ENCODE measurements at regions of chr5 and their contacts with region 1.

Region 1: GRCh38 chr5:81165493-81166119 is 67.5 kb upstream of the CKMT2 start:
- DNase-seq: peak in 8 of 9 donors; percentile 18 to 55 (median 43)
- ATAC-seq: peak; percentile 73
- H3K4me3 ChIP-seq: no peak overlapping the region
- H3K4me3 Mint-ChIP-seq: no peak overlapping the region
- H3K27ac ChIP-seq: no peak overlapping the region
- H3K27ac Mint-ChIP-seq: peak overlapping the region in 3 of 9 donors; percentile 7 to 20 (median 14)
- H3K4me1 ChIP-seq: no peaks in the 10 kb centered on the region
- H3K4me1 Mint-ChIP-seq: peaks cover 0 to 13% (median 3%) of the 10 kb centered on the region in 7 donors
- H3K27me3 ChIP-seq: no peaks in the 10 kb centered on the region
- H3K27me3 Mint-ChIP-seq: no peaks in the 10 kb centered on the region

Region 2: GRCh38 chr5:80487829-80488721 is 677.5 kb before region 1 on chr5 and contains the start of gene FAM151B:
- CTCF ChIA-PET with region 1: no interaction called
- POLR2A ChIA-PET with region 1: no interaction called
- intact Hi-C with region 1: loop called in 1 of 2 experiments (anchors 10 kb)
- DNase-seq: peak; percentile 58 to 86 (median 79)
- ATAC-seq: peak; percentile 90
- H3K4me3 ChIP-seq: peak within 1 kb of the TSS; percentile 71
- H3K4me3 Mint-ChIP-seq: peak within 1 kb of the TSS; percentile 83 to 92 (median 88)
- H3K27ac ChIP-seq: peak within 1 kb of the TSS; percentile 52
- H3K27ac Mint-ChIP-seq: peak within 1 kb of the TSS; percentile 47 to 88 (median 72)
- H3K4me1 ChIP-seq: peaks cover 0 to 7% of the 10 kb centered on the region in 2 donors
- H3K4me1 Mint-ChIP-seq: peaks cover 9 to 27% (median 14%) of the 10 kb centered on the region in 7 donors
- H3K27me3 ChIP-seq: no peaks in the 10 kb centered on the region
- H3K27me3 Mint-ChIP-seq: peaks cover 0 to 36% (median 7%) of the 10 kb centered on the region in 5 donors
- total RNA-seq, gene FAM151B: 0.36 to 3.4 (median 1.1) TPM in 4 of 5 experiments, not detected in the other

Region 3: DNA sequence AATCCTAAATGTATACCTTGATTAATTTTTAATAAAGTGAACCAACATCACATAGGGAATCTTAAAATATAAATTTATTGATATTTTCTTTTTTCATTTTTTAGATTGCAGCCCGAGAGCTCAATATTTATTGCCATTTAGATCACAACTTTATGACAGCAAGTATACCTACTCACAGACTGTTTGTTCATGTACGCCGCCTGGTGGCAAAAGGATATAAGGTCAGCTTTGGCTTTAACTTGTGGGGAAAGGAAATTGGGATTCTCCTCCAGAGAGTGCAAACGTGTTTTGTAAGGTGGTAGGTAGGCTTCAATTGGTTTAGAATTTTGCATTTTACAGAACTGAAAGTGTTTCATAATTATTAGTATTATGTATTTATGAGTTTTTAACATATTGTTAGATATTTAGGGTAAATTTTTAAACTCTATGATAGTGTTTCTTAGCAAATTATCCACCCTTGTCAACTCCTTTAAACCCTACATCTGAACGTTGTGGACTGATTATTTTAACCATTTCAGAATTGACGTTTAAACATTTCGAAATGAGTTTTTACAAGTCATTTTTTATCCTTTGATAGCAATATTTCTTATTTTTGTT is 493.4 kb before region 1 on chr5:
- CTCF ChIA-PET with region 1: no interaction called
- POLR2A ChIA-PET with region 1: no interaction called
- intact Hi-C with region 1: loop called in 1 of 2 experiments (anchors 1 kb)
- DNase-seq: peak; percentile 26 to 62 (median 48)
- ATAC-seq: peak; percentile 85
- H3K4me3 ChIP-seq: no peak overlapping the region
- H3K4me3 Mint-ChIP-seq: no peak overlapping the region
- H3K27ac ChIP-seq: no peak overlapping the region
- H3K27ac Mint-ChIP-seq: no peak overlapping the region
- H3K4me1 ChIP-seq: no peaks in the 10 kb centered on the region
- H3K4me1 Mint-ChIP-seq: peaks cover 0 to 19% (median 4%) of the 10 kb centered on the region in 7 donors
- H3K27me3 ChIP-seq: no peaks in the 10 kb centered on the region
- H3K27me3 Mint-ChIP-seq: no peaks in the 10 kb centered on the region

Region 4: DNA sequence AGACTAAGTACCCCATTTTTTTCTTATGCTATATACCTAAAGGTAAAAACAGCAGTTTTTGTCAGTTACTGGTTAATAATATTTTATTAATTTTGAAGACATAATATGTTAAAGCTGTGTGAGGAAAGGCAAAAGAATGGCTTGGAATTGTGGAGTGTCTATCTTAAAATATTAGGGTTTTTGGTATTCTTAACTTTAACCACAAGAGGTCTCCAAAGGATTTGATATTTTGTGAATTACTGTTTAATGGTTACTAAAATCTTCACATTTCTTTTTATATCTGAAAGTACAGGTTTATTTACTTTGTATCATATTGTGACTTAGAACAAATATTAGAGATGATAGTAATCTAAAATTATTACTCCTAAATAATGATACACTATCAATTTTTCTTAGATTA is 478.8 kb before region 1 on chr5:
- CTCF ChIA-PET with region 1: interaction called, 5 read pairs
- POLR2A ChIA-PET with region 1: no interaction called
- intact Hi-C with region 1: loop called (anchors 1 kb)
- DNase-seq: peak in 5 of 9 donors; percentile 11 to 42 (median 19)
- ATAC-seq: no peak
- H3K4me3 ChIP-seq: no peak overlapping the region
- H3K4me3 Mint-ChIP-seq: no peak overlapping the region
- H3K27ac ChIP-seq: no peak overlapping the region
- H3K27ac Mint-ChIP-seq: no peak overlapping the region
- H3K4me1 ChIP-seq: no peaks in the 10 kb centered on the region
- H3K4me1 Mint-ChIP-seq: peaks cover 7 to 35% (median 14%) of the 10 kb centered on the region in 7 donors
- H3K27me3 ChIP-seq: no peaks in the 10 kb centered on the region
- H3K27me3 Mint-ChIP-seq: no peaks in the 10 kb centered on the region

Region 5: GRCh38 chr5:80711938-80712337 is 453.7 kb before region 1 on chr5:
- CTCF ChIA-PET with region 1: interaction called, 5 read pairs
- POLR2A ChIA-PET with region 1: no interaction called
- intact Hi-C with region 1: loop called in 1 of 2 experiments (anchors 1 kb)
- DNase-seq: no peak
- ATAC-seq: no peak
- H3K4me3 ChIP-seq: no peak overlapping the region
- H3K4me3 Mint-ChIP-seq: no peak overlapping the region
- H3K27ac ChIP-seq: no peak overlapping the region
- H3K27ac Mint-ChIP-seq: peak overlapping the region in 1 of 9 donors; percentile 72
- H3K4me1 ChIP-seq: no peaks in the 10 kb centered on the region
- H3K4me1 Mint-ChIP-seq: peaks cover 0 to 42% (median 4%) of the 10 kb centered on the region in 7 donors
- H3K27me3 ChIP-seq: no peaks in the 10 kb centered on the region
- H3K27me3 Mint-ChIP-seq: no peaks in the 10 kb centered on the region

Region 6: GRCh38 chr5:80935811-80936385 is 229.7 kb before region 1 on chr5:
- CTCF ChIA-PET with region 1: interaction called, 3 read pairs
- POLR2A ChIA-PET with region 1: no interaction called
- intact Hi-C with region 1: loop called in 1 of 2 experiments (anchors 1 kb)
- DNase-seq: peak in 1 of 9 donors; percentile 15
- ATAC-seq: no peak
- H3K4me3 ChIP-seq: no peak overlapping the region
- H3K4me3 Mint-ChIP-seq: no peak overlapping the region
- H3K27ac ChIP-seq: no peak overlapping the region
- H3K27ac Mint-ChIP-seq: peak overlapping the region in 2 of 9 donors; percentile 16 to 69
- H3K4me1 ChIP-seq: no peaks in the 10 kb centered on the region
- H3K4me1 Mint-ChIP-seq: peaks cover 0 to 13% (median 7%) of the 10 kb centered on the region in 7 donors
- H3K27me3 ChIP-seq: no peaks in the 10 kb centered on the region
- H3K27me3 Mint-ChIP-seq: no peaks in the 10 kb centered on the region

Region 7: GRCh38 chr5:81187885-81188284 is 22.3 kb after region 1 on chr5:
- CTCF ChIA-PET with region 1: no interaction called
- POLR2A ChIA-PET with region 1: no interaction called
- intact Hi-C with region 1: no loop called
- DNase-seq: no peak
- ATAC-seq: no peak
- H3K4me3 ChIP-seq: no peak overlapping the region
- H3K4me3 Mint-ChIP-seq: peak overlapping the region in 1 of 10 donors; percentile 63
- H3K27ac ChIP-seq: no peak overlapping the region
- H3K27ac Mint-ChIP-seq: peak overlapping the region in 8 of 9 donors; percentile 26 to 81 (median 66)
- H3K4me1 ChIP-seq: no peaks in the 10 kb centered on the region
- H3K4me1 Mint-ChIP-seq: peaks cover 0 to 23% (median 0%) of the 10 kb centered on the region in 7 donors
- H3K27me3 ChIP-seq: no peaks in the 10 kb centered on the region
- H3K27me3 Mint-ChIP-seq: no peaks in the 10 kb centered on the region